ENCODE measurements at regions of chr9 and their contacts with region 1.

Region 1: DNA sequence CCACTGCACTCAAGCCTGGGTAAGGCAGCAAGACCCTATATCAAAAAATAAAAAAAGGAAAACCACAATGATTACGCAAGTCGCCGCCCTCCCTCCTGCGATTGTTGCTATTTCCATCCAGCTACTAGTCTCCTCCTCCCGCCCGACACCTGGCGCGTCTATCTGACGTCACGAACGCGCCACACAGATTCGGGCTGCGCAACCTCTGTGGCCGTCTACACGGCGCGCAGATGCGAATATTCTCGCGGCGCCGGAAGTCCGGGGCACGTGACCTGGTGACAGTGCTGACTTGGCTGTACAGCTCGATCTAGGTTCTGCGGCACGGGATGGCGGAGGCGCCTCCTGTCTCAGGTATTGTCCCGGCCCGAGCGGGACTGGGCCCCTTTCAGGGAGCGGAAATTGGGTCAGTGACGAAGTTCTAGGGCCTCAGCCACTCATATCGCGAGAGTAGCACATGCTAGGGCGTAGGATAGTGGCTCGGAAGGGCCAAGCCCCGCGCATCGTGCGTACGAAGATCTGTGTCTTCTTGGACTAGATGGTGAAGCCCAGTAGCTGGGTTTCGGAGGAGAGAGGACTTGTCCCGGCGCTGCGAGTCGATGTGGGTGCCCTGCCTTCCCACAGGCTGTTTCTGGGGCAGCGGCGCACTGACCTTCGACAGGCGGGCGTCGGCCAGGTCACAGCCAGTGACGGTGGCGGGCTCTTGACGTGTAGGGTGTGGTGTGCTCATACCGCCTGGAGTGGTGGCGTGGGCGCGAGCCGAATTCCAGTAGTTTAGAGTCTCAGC is at the start of gene NFX1:
- DNase-seq: peak; percentile 100
- H3K4me3 Mint-ChIP-seq: peak within 1 kb of the TSS; percentile 99
- H3K27ac Mint-ChIP-seq: peak within 1 kb of the TSS; percentile 100
- H3K4me1 Mint-ChIP-seq: peaks cover 53% of the 10 kb centered on the region
- H3K27me3 Mint-ChIP-seq: peaks cover 3% of the 10 kb centered on the region
- total RNA-seq, gene NFX1: 37.2 and 38.7 TPM in 2 replicates

Region 2: GRCh38 chr9:32487981-32488380 is 802.5 kb before region 1 on chr9:
- intact Hi-C with region 1: no loop called
- DNase-seq: no peak
- H3K4me3 Mint-ChIP-seq: no peak overlapping the region
- H3K27ac Mint-ChIP-seq: no peak overlapping the region
- H3K4me1 Mint-ChIP-seq: no peaks in the 10 kb centered on the region
- H3K27me3 Mint-ChIP-seq: no peaks in the 10 kb centered on the region

Region 3: DNA sequence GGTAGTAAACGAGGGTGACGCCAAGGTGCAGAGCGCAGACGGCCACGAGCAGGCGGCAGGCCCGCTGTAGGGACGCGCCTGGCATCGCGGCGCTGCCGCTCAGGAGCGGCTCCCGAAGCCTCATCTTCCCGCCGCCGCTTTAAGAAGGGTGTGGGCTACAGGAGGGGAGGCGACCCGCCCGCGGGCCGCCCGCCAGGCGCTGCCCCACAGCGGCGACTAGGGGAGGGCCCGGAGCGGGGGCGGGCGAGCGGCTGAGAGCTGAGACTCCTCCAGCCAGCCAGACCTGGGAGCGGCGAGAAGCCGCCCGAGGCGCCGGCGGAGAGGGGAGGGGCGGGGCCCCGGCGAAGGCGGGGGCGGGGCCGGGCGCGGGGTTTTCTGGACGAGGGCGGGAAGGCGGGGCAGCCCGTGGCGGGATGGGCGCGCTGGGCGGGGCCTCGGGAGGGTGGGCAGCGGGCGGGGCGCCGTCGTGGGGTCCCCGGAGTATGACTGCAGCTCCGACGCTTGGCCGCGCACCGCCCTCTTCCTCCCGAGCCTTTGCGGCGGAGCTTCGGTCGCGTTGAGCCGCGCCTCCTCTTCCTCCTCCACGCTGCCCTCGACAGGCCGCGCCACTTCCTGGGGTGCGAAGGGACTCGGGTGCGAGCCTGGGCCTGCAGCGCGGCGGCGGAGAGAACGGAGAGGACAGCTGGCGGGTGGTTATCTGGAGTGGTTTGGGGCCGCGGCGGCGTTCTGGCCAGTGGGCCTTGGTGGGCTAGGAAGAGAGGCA is 123.2 kb before region 1 on chr9 and contains the start of gene B4GALT1:
- intact Hi-C with region 1: loop called (anchors 1 kb)
- DNase-seq: peak; percentile 97
- H3K4me3 Mint-ChIP-seq: peak within 1 kb of the TSS; percentile 95
- H3K27ac Mint-ChIP-seq: peak within 1 kb of the TSS; percentile 98
- H3K4me1 Mint-ChIP-seq: peaks cover 65% of the 10 kb centered on the region
- H3K27me3 Mint-ChIP-seq: no peaks in the 10 kb centered on the region
- total RNA-seq, gene B4GALT1: 53.8 and 55.7 TPM in 2 replicates

Region 4: GRCh38 chr9:33225319-33226149 is 64.9 kb before region 1 on chr9:
- intact Hi-C with region 1: no loop called
- DNase-seq: peak; percentile 92
- H3K4me3 Mint-ChIP-seq: no peak overlapping the region
- H3K27ac Mint-ChIP-seq: peak overlapping the region; percentile 0
- H3K4me1 Mint-ChIP-seq: peaks cover 23% of the 10 kb centered on the region
- H3K27me3 Mint-ChIP-seq: peaks cover 3% of the 10 kb centered on the region

Region 5: GRCh38 chr9:33320568-33321261 is 30.3 kb after region 1 on chr9:
- intact Hi-C with region 1: loop called (anchors 1 kb)
- DNase-seq: no peak
- H3K4me3 Mint-ChIP-seq: no peak overlapping the region
- H3K27ac Mint-ChIP-seq: peak overlapping the region; percentile 76
- H3K4me1 Mint-ChIP-seq: peaks cover 12% of the 10 kb centered on the region
- H3K27me3 Mint-ChIP-seq: no peaks in the 10 kb centered on the region

Region 6: GRCh38 chr9:33350310-33350709 is 59.9 kb after region 1 on chr9:
- intact Hi-C with region 1: no loop called
- DNase-seq: no peak
- H3K4me3 Mint-ChIP-seq: no peak overlapping the region
- H3K27ac Mint-ChIP-seq: no peak overlapping the region
- H3K4me1 Mint-ChIP-seq: peaks cover 8% of the 10 kb centered on the region
- H3K27me3 Mint-ChIP-seq: no peaks in the 10 kb centered on the region

Region 7: GRCh38 chr9:33415501-33416038 is 125.1 kb after region 1 on chr9:
- intact Hi-C with region 1: loop called (anchors 1 kb)
- DNase-seq: peak; percentile 98
- H3K4me3 Mint-ChIP-seq: peak overlapping the region; percentile 69
- H3K27ac Mint-ChIP-seq: peak overlapping the region; percentile 94
- H3K4me1 Mint-ChIP-seq: peaks cover 50% of the 10 kb centered on the region
- H3K27me3 Mint-ChIP-seq: peaks cover 2% of the 10 kb centered on the region

Region 8: DNA sequence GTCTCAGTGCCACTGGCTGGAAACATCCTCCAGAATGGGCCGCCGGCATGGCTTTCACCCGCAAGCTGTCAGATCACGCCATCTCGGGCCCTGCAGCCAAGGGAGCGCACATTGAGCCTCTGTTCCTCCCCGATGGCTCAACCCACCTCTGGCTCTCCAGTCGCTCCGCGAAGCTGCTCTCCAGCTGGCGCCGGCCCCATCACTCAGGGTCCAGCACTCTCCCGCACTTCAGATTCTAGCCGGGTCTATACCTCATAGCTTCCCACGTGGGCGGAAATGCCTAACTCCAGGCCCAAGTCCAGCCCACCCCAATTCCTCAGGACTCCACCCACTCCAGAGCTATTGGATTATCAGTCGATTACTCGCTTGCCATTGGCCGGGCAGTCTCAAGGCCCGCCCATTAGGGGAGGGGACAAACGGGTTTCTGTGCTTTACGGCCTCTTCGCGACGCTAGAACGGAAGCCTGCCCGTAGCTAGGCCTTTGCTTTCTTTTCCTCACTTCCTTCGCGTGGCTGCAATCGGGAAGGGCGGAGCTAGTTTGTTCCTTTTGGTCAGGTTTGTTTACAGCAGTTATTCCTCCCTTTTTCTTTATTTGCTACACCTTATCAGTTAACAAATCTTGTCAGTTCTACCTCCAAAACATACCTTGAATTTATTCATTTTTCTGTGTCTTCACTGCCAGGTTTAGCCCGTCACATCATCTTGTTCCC is 183.4 kb after region 1 on chr9 and contains the start of gene NOL6:
- intact Hi-C with region 1: loop called (anchors 1 kb)
- DNase-seq: peak; percentile 100
- H3K4me3 Mint-ChIP-seq: peak within 1 kb of the TSS; percentile 95
- H3K27ac Mint-ChIP-seq: peak within 1 kb of the TSS; percentile 95
- H3K4me1 Mint-ChIP-seq: peaks cover 15% of the 10 kb centered on the region
- H3K27me3 Mint-ChIP-seq: no peaks in the 10 kb centered on the region
- total RNA-seq, gene NOL6: 86.7 and 86.8 TPM in 2 replicates